ENCODE measurements at regions of chr9 and their contacts with region 1.

Region 1: GRCh38 chr9:104747558-104748358 is at the start of gene NIPSNAP3A:
- DNase-seq: peak; percentile 91
- ATAC-seq: peak; percentile 89
- H3K4me3 Mint-ChIP-seq: peak within 1 kb of the TSS; percentile 99
- H3K27ac Mint-ChIP-seq: peak within 1 kb of the TSS; percentile 99
- H3K4me1 Mint-ChIP-seq: peaks cover 34% of the 10 kb centered on the region
- H3K27me3 Mint-ChIP-seq: no peaks in the 10 kb centered on the region
- CTCF ChIP-seq: no peak
- total RNA-seq, gene NIPSNAP3A: 21.9 and 22.7 TPM in 2 replicates

Region 2: DNA sequence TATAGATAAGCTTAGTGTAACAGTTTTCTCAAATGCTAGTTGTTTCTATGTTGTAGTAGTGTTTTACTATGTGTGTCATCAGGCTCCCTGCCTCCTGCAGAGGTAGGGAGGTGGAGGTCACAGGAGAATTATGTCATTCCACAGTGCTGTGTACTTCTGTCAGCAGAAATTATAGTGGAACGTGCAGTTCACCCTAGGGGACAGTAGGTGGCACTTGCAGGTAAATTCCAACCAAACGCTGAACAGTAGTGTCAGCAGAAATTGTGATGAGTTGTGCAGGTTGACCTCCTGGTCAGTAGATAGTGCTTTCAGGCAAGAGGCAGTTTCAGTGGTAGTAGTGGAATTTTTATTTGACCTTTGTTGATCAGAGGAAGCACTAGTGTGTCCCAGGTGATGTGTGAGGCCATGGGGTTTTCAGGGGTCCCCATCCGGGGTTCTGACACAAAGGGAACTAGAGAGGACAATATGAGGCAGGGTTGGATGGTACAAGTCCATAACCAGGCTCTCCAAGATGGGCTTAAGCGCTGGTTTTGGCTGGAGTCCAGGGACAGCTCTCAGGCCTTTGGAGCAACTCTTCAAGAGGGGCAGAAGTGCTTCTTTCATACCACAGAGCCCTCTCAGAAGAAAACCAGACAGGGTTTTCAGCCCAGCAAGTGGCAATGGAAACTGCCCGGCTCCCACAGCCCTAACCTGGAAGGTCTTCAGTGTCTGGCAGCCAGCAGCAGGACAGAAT is 1349.7 kb before region 1 on chr9:
- CTCF ChIA-PET with region 1: interaction called, 6 read pairs
- POLR2A ChIA-PET with region 1: no interaction called
- intact Hi-C with region 1: loop called (anchors 1 kb)
- DNase-seq: no peak
- ATAC-seq: peak; percentile 70
- H3K4me3 Mint-ChIP-seq: no peak overlapping the region
- H3K27ac Mint-ChIP-seq: no peak overlapping the region
- H3K4me1 Mint-ChIP-seq: no peaks in the 10 kb centered on the region
- H3K27me3 Mint-ChIP-seq: no peaks in the 10 kb centered on the region
- CTCF ChIP-seq: no peak

Region 3: GRCh38 chr9:104177003-104177611 is 570.7 kb before region 1 on chr9:
- CTCF ChIA-PET with region 1: interaction called, 7 read pairs
- POLR2A ChIA-PET with region 1: no interaction called
- intact Hi-C with region 1: loop called (anchors 1 kb)
- DNase-seq: no peak
- ATAC-seq: no peak
- H3K4me3 Mint-ChIP-seq: no peak overlapping the region
- H3K27ac Mint-ChIP-seq: no peak overlapping the region
- H3K4me1 Mint-ChIP-seq: no peaks in the 10 kb centered on the region
- H3K27me3 Mint-ChIP-seq: peaks cover 1% of the 10 kb centered on the region
- CTCF ChIP-seq: no peak

Region 4: GRCh38 chr9:104765138-104765537 is 17.4 kb after region 1 on chr9:
- CTCF ChIA-PET with region 1: interaction called, 6 read pairs
- POLR2A ChIA-PET with region 1: interaction called, 83 read pairs
- intact Hi-C with region 1: loop called (anchors 1 kb)
- DNase-seq: no peak
- ATAC-seq: peak; percentile 8
- H3K4me3 Mint-ChIP-seq: peak overlapping the region; percentile 90
- H3K27ac Mint-ChIP-seq: peak overlapping the region; percentile 90
- H3K4me1 Mint-ChIP-seq: peaks cover 44% of the 10 kb centered on the region
- H3K27me3 Mint-ChIP-seq: no peaks in the 10 kb centered on the region
- CTCF ChIP-seq: no peak

Region 5: GRCh38 chr9:104802110-104802509 is 54.4 kb after region 1 on chr9:
- CTCF ChIA-PET with region 1: no interaction called
- POLR2A ChIA-PET with region 1: no interaction called
- intact Hi-C with region 1: loop called (anchors 5 kb)
- DNase-seq: no peak
- ATAC-seq: no peak
- H3K4me3 Mint-ChIP-seq: no peak overlapping the region
- H3K27ac Mint-ChIP-seq: no peak overlapping the region
- H3K4me1 Mint-ChIP-seq: no peaks in the 10 kb centered on the region
- H3K27me3 Mint-ChIP-seq: no peaks in the 10 kb centered on the region
- CTCF ChIP-seq: no peak

Region 6: GRCh38 chr9:104991144-104991953 is 243.6 kb after region 1 on chr9:
- CTCF ChIA-PET with region 1: no interaction called
- POLR2A ChIA-PET with region 1: no interaction called
- intact Hi-C with region 1: loop called (anchors 10 kb)
- DNase-seq: peak; percentile 69
- ATAC-seq: peak; percentile 80
- H3K4me3 Mint-ChIP-seq: peak overlapping the region; percentile 86
- H3K27ac Mint-ChIP-seq: peak overlapping the region; percentile 69
- H3K4me1 Mint-ChIP-seq: peaks cover 33% of the 10 kb centered on the region
- H3K27me3 Mint-ChIP-seq: peaks cover 2% of the 10 kb centered on the region
- CTCF ChIP-seq: no peak

Region 7: GRCh38 chr9:105447814-105448812 is 700.4 kb after region 1 on chr9 and contains the start of gene FSD1L:
- CTCF ChIA-PET with region 1: no interaction called
- POLR2A ChIA-PET with region 1: no interaction called
- intact Hi-C with region 1: loop called (anchors 2 kb)
- DNase-seq: peak; percentile 89
- ATAC-seq: peak; percentile 92
- H3K4me3 Mint-ChIP-seq: peak within 1 kb of the TSS; percentile 90
- H3K27ac Mint-ChIP-seq: peak within 1 kb of the TSS; percentile 75
- H3K4me1 Mint-ChIP-seq: peaks cover 17% of the 10 kb centered on the region
- H3K27me3 Mint-ChIP-seq: no peaks in the 10 kb centered on the region
- CTCF ChIP-seq: no peak
- total RNA-seq, gene FSD1L: 10.2 and 12.4 TPM in 2 replicates